Activated T-helper 1 cell treated with anti-CD3 and anti-CD28 coated beads, Interleukin-12 subunit alpha, Interleukin-12 subunit beta, Interleukin-2, Interleukin-4 antibody, amounts not matched to agents 30 ng/mL and 10 ng/mL and 1 ng/mL, durations not matched to agents 14 hours and 24 hours and 36 hours (primary cell): ENCODE measurements at regions of chr7 and their contacts with region 1.

Region 1: DNA sequence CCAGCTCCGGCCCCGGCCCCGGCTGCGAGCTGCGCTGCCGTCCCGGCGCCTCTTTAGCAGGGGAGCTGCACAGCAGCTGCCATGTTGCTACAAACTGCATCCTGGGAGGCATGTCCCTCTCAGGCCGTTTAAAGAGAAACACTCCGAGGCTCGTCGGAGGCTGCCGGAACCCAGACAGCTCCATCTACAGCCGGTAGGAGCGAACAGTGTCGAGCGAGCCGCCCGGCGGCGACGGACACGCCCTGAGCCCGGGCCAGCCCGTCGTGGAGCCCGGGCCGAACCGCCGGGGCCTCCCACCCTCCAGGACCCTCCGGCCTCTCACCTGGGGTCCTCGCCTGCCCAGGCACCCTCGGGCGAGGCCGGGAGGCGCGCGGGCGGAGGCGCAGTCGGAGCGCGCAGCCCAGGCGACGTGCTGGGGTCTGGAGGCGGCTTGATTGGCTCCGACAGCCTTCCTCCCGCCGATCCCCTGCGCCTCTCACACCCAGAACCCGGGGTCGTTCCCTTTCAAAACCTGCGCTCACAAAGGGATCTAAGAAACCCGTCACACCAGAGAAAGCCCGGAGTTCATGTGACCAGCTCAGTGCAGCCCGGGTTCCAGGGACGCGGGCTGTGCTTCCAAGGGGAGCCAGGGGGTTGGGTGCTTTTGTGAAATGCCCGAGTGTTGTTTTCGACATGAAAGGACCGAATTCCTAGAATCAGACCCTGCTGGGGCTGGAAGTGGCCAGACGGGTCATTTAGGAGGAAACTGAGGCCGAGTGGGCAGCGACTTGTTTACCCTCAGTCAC is at the start of gene ZNF777:
- DNase-seq: peak; percentile 80
- H3K4me3 Mint-ChIP-seq: peak within 1 kb of the TSS; percentile 85
- H3K27ac Mint-ChIP-seq: peak within 1 kb of the TSS; percentile 66
- H3K4me1 Mint-ChIP-seq: peaks cover 23% of the 10 kb centered on the region
- H3K27me3 Mint-ChIP-seq: peaks cover 27% of the 10 kb centered on the region
- total RNA-seq, gene ZNF777: 19.0 and 19.3 TPM in 2 replicates

Region 2: DNA sequence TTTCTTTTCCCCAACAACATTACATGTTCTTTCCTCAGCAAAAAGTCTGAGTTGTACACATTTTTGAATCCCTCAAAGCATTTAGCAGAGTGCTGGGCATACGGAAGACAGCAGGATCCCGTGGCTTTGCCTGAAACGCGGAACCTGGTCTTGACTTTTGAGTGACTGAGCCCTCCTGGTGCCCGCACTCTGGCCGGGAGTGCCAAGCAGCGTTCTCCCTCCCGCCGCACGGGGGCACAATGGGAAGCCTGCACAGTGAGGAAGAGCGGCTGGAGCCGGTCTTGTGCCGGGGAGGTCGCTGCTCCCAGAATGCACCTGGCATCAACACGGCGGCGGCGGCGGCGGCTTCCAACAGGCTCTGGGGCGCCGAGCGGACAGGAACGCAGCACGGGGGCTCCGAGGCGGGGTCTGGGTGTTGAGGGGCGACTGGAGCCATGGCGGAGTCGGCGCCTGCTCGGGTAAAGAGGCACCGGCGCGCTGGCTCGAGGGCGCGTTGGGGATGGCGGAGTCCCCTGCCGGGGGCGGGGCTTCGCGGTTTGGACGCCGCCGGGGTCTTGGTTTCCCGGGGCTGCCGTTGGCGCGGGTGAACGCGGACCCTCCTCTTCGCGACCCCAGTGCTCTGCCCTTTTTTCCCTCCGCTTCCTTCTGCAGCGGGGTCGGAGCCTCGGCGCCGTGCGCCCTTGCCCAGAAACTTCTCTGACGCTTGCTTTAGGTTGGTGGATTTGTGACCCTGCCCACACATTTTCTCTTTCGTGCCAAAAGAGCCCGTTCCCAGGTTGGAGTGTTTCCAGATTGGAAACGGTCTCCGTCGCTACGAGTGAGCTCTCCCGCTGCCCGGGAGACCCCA is 221.1 kb before region 1 on chr7 and contains the start of gene ZNF212:
- intact Hi-C with region 1: loop called (anchors 1 kb)
- DNase-seq: peak; percentile 84
- H3K4me3 Mint-ChIP-seq: peak within 1 kb of the TSS; percentile 92
- H3K27ac Mint-ChIP-seq: peak within 1 kb of the TSS; percentile 81
- H3K4me1 Mint-ChIP-seq: peaks cover 27% of the 10 kb centered on the region
- H3K27me3 Mint-ChIP-seq: no peaks in the 10 kb centered on the region
- total RNA-seq, gene ZNF212: 15.0 and 17.8 TPM in 2 replicates

Region 3: DNA sequence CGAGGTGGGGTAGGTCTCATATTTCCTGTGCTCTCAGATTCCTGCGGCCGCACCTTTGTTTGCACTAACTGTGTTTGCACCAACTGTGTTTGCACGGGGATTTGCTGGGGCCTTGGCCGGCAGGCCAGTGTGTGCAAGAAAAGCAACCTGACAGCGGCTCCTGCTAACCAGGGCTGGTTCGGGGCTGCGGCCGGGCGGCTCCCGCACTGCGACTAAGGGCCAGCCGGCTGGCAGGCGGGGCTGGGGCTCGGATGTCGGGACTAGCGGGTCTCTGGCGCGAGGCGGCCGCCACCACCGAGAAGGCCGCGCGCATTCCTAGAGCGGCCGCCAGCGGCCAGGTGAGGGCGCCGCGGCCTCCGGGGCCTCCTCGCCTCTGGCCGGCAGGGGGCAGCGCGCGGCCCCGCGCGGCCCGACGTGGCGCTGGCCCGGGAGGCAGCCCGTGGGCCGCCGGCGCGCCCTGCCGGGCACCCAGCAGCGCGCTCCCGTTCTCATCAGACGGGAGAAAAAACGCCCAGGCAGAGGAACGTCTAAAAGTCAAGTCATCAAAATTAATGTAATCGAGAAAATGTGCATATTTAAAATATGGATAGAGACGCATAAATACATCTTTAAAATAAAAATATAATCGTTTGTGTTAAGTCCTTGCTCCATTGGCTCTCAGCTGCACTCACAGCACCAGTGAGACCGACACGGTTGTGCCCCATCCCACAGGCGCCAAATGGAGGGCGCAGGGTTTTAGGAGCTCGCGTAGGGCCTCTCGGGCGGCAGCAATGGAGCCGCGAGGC is 38.4 kb before region 1 on chr7:
- intact Hi-C with region 1: loop called (anchors 1 kb)
- DNase-seq: peak; percentile 73
- H3K4me3 Mint-ChIP-seq: peak overlapping the region; percentile 66
- H3K27ac Mint-ChIP-seq: peak overlapping the region; percentile 61
- H3K4me1 Mint-ChIP-seq: no peaks in the 10 kb centered on the region
- H3K27me3 Mint-ChIP-seq: peaks cover 4% of the 10 kb centered on the region

Region 4: GRCh38 chr7:149448961-149449360 is 11.7 kb before region 1 on chr7:
- intact Hi-C with region 1: no loop called
- DNase-seq: no peak
- H3K4me3 Mint-ChIP-seq: no peak overlapping the region
- H3K27ac Mint-ChIP-seq: no peak overlapping the region
- H3K4me1 Mint-ChIP-seq: no peaks in the 10 kb centered on the region
- H3K27me3 Mint-ChIP-seq: no peaks in the 10 kb centered on the region

Region 5: GRCh38 chr7:149524394-149524793 is 63.7 kb after region 1 on chr7:
- intact Hi-C with region 1: no loop called
- DNase-seq: no peak
- H3K4me3 Mint-ChIP-seq: no peak overlapping the region
- H3K27ac Mint-ChIP-seq: no peak overlapping the region
- H3K4me1 Mint-ChIP-seq: no peaks in the 10 kb centered on the region
- H3K27me3 Mint-ChIP-seq: peaks cover 7% of the 10 kb centered on the region

Region 6: GRCh38 chr7:149598721-149599306 is 138.1 kb after region 1 on chr7:
- intact Hi-C with region 1: loop called (anchors 1 kb)
- DNase-seq: peak; percentile 9
- H3K4me3 Mint-ChIP-seq: no peak overlapping the region
- H3K27ac Mint-ChIP-seq: no peak overlapping the region
- H3K4me1 Mint-ChIP-seq: peaks cover 32% of the 10 kb centered on the region
- H3K27me3 Mint-ChIP-seq: peaks cover 4% of the 10 kb centered on the region

Region 7: DNA sequence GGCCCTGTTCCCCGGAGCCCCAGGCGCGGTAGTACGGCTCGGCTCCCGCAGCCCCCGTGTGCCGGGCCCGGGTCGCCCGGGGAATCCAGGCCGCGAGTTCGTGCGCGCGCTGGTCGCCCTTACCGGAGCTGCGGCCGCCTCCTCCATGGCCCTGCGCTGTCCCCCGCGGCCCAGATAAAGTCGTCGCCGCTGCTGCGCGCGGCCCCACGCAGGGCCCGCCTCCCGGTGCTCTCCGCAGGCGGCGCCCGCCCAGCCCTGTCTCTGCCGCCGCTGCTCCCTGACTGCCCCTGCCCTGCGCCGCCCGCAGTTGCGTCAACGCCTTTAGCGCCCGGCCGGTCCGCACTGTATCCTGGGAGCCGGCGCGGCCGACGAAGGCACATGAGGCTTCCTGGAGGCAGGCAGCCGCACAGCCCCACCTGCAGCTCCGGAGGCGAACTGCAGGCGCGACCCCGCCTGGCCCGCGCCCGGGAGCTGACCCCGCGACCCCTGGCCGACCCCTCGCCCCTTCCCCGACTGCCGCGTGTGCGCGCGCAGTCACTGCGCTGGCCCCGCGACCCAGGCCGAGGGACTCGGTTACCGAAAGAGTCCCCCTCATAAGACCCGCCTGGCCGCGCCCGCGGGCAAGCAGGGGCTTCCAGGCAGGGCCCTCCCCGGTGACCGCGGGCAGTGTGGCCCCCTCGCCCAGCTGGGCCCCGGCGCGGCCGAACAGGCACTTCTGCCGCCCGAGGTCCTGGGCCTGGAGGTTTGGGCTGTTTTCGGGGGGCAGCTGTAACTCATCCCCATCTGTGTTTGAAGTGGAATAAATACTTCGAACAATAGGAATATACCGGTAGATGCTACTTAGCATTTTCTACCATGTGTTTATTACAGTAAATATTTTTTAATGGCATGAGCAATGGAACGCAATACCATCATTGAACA is 164.0 kb after region 1 on chr7:
- intact Hi-C with region 1: loop called (anchors 1 kb)
- DNase-seq: peak; percentile 91
- H3K4me3 Mint-ChIP-seq: peak overlapping the region; percentile 89
- H3K27ac Mint-ChIP-seq: peak overlapping the region; percentile 83
- H3K4me1 Mint-ChIP-seq: peaks cover 32% of the 10 kb centered on the region
- H3K27me3 Mint-ChIP-seq: peaks cover 6% of the 10 kb centered on the region